Left cardiac atrium (tissue), 4 donors: ENCODE measurements at regions of chr1 and their contacts with region 1.

Region 1: DNA sequence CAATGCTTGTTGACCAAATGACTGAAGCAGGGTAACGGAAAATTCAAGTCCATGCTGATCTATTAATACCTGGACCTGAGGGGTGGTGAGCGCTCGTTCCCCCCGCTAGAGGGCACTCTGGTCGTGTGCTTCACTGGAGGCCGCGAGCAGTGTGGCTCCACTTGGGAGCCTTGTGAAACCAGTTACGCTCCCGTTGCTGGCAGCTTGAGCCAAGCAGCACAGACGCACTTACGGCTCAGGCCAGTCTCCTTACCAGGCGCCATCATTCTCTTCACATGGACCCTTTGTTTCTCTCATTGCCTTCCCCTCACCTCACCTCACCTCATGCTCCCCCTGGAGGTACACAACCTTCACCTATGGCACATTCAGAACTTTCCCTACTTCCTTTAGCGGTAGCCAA is 49.7 kb upstream of the TSPAN2 start:
- DNase-seq: peak; percentile 92
- ATAC-seq: peak; percentile 88 to 92

Region 2: GRCh38 chr1:113721010-113721409 is 1418.0 kb before region 1 on chr1:
- intact Hi-C with region 1: no loop called
- DNase-seq: no peak
- ATAC-seq: no peak

Region 3: GRCh38 chr1:115021154-115021553 is 117.8 kb before region 1 on chr1:
- intact Hi-C with region 1: no loop called
- DNase-seq: no peak
- ATAC-seq: no peak

Region 4: DNA sequence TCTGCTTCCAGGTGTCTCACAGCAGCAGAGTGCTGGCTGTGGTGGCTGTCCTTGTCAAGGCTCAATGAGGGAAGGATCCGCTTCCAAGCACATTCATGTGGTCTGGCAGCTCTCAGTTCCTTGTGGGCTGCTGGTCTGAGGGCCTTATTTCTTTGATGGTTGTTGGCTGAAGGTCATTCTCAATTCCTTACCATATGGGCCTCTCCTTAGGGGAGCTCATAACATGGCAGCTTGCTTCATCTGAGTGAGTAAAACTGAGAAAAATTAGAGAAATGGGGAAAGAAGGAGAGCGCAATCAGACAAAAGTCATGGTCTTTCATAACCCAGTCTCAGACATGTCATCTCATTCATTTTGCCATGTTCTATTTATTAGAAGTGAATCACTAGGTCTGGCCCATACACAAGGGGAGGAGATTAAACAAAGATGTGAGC is 32.0 kb after region 1 on chr1:
- intact Hi-C with region 1: no loop called
- DNase-seq: no peak
- ATAC-seq: peak in 1 of 2 donors; percentile 19

Region 5: GRCh38 chr1:115463363-115463746 is 324.4 kb after region 1 on chr1:
- intact Hi-C with region 1: loop called (anchors 1 to 5 kb)
- DNase-seq: no peak
- ATAC-seq: peak in 1 of 2 donors; percentile 75

Region 6: GRCh38 chr1:115469703-115470476 is 330.9 kb after region 1 on chr1:
- intact Hi-C with region 1: loop called in 1 of 2 experiments (anchors 5 kb)
- DNase-seq: peak; percentile 45
- ATAC-seq: peak; percentile 56 to 77